Endothelial cell of umbilical vein (primary cell): ENCODE measurements at regions of chr12 and their contacts with region 1.

Region 1: GRCh38 chr12:114668151-114668885 is 15.7 kb downstream of the TBX3 start:
- DNase-seq: peak; percentile 38
- H3K4me3 ChIP-seq: no peak overlapping the region
- H3K27ac ChIP-seq: no peak overlapping the region
- H3K4me1 ChIP-seq: no peaks in the 10 kb centered on the region
- H3K27me3 ChIP-seq: peaks cover 62 to 73% of the 10 kb centered on the region in 2 experiments
- CTCF ChIP-seq: peak; percentile 15 to 46
- POLR2A ChIP-seq: no peak

Region 2: DNA sequence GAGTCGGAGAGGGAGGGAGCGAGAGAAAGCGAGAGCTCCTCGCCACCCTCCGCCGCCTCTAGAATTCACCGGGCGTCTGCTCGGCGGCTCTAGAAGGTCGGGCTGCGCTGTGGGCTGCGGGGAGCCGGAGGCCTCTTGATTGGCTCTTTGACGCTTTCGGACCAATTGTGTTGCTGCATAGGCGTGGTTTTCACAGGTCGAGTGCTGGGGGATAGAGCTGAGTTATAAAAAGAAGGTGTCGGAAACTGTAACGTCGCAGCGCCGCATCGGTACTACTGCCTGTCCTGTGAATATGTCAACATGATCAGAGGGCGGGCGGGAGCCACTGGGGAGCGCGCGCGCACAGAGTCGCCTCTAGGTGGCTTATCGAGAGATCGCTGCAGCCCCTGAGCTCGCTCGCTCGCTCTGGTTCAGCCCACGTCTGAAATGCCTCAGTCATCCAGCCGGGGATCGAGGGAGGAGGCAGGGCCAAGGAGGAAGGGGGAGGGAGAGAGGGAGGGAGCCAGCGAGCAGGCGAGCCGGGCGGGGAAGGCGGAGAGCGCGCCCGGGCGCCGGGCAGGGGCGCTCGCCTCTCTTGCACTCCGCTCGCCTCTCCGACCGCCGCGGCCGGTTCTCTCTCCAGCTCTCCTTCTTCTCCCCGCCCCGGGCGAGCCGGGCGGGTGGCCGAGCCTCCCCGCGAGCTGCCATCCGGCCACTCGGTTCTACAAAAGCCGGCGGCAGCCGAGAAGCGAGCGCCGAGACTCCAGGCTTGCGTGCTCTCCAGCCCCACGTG is 16.0 kb after region 1 on chr12 and contains the start of gene TBX3:
- CTCF ChIA-PET with region 1: interaction called, 8 read pairs
- POLR2A ChIA-PET with region 1: interaction called, 6 read pairs
- dilution Hi-C with region 1: no loop called
- intact Hi-C with region 1: loop called (anchors 1 kb)
- DNase-seq: peak; percentile 95
- H3K4me3 ChIP-seq: peak within 1 kb of the TSS; percentile 28 to 58 (median 44)
- H3K27ac ChIP-seq: no peak within 1 kb of the TSS
- H3K4me1 ChIP-seq: no peaks in the 10 kb centered on the region
- H3K27me3 ChIP-seq: peaks cover 43 to 46% of the 10 kb centered on the region in 2 experiments
- CTCF ChIP-seq: peak; percentile 34 to 53
- POLR2A ChIP-seq: no peak
- total RNA-seq, gene TBX3: 1.1 and 2.0 TPM in 2 replicates

Region 3: GRCh38 chr12:115752913-115753726 is 1084.8 kb after region 1 on chr12:
- CTCF ChIA-PET with region 1: no interaction called
- POLR2A ChIA-PET with region 1: no interaction called
- dilution Hi-C with region 1: no loop called
- intact Hi-C with region 1: loop called (anchors 1 kb)
- DNase-seq: peak; percentile 18
- H3K4me3 ChIP-seq: no peak overlapping the region
- H3K27ac ChIP-seq: no peak overlapping the region
- H3K4me1 ChIP-seq: no peaks in the 10 kb centered on the region
- H3K27me3 ChIP-seq: no peaks in the 10 kb centered on the region
- CTCF ChIP-seq: peak; percentile 7 to 22
- POLR2A ChIP-seq: no peak